Activated CD8-positive, alpha-beta T cell treated with anti-CD3 and anti-CD28 coated beads for 36 hours (primary cell): ENCODE measurements at regions of chr7 and their contacts with region 1.

Region 1: GRCh38 chr7:99990460-99990852 is 14.6 kb upstream of the AZGP1 start:
- DNase-seq: no peak
- ATAC-seq: no peak
- H3K4me3 Mint-ChIP-seq: no peak overlapping the region
- H3K27ac Mint-ChIP-seq: no peak overlapping the region
- H3K4me1 Mint-ChIP-seq: peaks cover 3% of the 10 kb centered on the region
- H3K27me3 Mint-ChIP-seq: peaks cover 4% of the 10 kb centered on the region
- CTCF ChIP-seq: no peak

Region 2: DNA sequence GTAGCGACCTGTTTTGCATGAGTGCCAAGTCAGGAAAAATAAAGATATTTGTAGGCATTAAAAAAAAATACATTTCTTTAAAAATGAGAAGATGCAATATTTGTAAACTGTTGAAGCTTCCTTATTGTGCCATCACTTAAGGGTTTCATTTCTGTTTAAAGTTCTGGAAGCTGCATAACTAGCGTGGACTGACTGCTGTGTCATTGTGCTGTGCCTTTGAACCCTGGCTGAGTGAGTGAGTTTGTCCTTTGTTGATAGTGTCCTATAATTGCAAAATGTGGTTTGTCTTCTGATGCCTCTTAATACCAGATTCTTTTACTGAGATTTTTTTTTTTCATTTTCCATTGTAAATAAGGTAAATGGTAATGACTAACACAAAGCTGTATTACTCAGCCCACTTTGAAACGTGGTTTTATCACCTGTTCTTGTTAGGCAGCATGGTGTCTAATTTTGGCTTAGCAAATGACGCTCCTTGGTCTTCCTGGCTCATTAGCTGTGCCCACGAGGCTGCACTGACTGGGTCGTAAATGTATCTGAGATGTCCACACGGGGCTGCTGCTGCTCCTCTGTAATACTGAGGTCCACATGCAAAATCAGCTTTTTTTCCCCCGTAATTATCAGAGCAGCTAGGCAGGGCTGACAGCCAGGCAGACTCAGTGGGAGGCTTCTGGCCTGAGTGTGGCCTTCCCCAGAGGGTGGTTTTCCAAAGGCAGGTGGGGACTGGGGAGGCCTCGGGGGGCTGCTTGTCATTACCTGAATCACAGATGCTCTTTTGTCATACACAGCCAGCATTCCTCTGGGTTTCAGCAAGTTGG is 359.0 kb before region 1 on chr7:
- CTCF ChIA-PET with region 1: interaction called, 13 read pairs
- POLR2A ChIA-PET with region 1: no interaction called
- intact Hi-C with region 1: no loop called
- DNase-seq: peak; percentile 87
- ATAC-seq: peak; percentile 97
- H3K4me3 Mint-ChIP-seq: peak overlapping the region; percentile 41
- H3K27ac Mint-ChIP-seq: peak overlapping the region; percentile 96
- H3K4me1 Mint-ChIP-seq: peaks cover 72% of the 10 kb centered on the region
- H3K27me3 Mint-ChIP-seq: no peaks in the 10 kb centered on the region
- CTCF ChIP-seq: peak; percentile 54

Region 3: DNA sequence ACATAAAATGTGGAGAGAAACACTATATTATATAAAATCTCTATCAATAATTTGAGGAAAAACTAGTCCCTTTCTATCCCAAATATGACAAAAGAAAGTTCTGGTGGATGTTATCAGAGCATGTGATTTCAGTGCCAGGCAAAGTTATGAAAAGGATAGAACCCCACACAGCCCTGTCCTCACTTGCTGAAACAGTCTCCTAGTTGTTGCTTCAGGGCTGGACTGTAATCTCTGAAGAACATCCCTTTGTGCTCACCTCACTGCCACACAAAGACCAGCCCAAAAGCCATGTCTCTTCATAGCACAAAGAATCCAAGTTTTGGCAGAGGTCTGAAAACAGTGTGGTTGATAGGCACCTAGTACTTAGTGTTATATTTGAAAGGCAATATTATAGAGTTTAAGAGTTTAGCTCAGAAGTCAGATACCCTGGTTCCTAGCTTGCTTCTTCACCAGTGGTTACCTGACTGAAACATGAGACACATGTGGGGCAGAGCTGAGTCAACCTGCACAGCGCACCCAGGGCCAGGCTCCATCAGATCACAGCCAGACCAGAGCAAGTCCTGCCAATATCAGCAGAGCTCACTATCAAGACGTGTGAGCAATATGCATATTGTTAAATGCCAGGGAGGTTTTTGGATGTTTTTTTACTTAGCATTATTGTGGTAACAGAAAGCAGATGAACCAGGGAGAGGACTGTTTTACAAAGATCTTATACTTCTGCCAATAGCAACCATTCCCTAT is 280.4 kb before region 1 on chr7:
- CTCF ChIA-PET with region 1: no interaction called
- POLR2A ChIA-PET with region 1: no interaction called
- intact Hi-C with region 1: no loop called
- DNase-seq: no peak
- ATAC-seq: no peak
- H3K4me3 Mint-ChIP-seq: no peak overlapping the region
- H3K27ac Mint-ChIP-seq: no peak overlapping the region
- H3K4me1 Mint-ChIP-seq: no peaks in the 10 kb centered on the region
- H3K27me3 Mint-ChIP-seq: no peaks in the 10 kb centered on the region
- CTCF ChIP-seq: no peak

Region 4: GRCh38 chr7:99975782-99976521 is 14.5 kb before region 1 on chr7 and contains the start of gene AZGP1:
- CTCF ChIA-PET with region 1: interaction called, 36 read pairs
- POLR2A ChIA-PET with region 1: no interaction called
- intact Hi-C with region 1: no loop called
- DNase-seq: no peak
- ATAC-seq: peak; percentile 18
- H3K4me3 Mint-ChIP-seq: no peak within 1 kb of the TSS
- H3K27ac Mint-ChIP-seq: no peak within 1 kb of the TSS
- H3K4me1 Mint-ChIP-seq: peaks cover 10% of the 10 kb centered on the region
- H3K27me3 Mint-ChIP-seq: peaks cover 5% of the 10 kb centered on the region
- CTCF ChIP-seq: no peak
- total RNA-seq, gene AZGP1: not detected

Region 5: DNA sequence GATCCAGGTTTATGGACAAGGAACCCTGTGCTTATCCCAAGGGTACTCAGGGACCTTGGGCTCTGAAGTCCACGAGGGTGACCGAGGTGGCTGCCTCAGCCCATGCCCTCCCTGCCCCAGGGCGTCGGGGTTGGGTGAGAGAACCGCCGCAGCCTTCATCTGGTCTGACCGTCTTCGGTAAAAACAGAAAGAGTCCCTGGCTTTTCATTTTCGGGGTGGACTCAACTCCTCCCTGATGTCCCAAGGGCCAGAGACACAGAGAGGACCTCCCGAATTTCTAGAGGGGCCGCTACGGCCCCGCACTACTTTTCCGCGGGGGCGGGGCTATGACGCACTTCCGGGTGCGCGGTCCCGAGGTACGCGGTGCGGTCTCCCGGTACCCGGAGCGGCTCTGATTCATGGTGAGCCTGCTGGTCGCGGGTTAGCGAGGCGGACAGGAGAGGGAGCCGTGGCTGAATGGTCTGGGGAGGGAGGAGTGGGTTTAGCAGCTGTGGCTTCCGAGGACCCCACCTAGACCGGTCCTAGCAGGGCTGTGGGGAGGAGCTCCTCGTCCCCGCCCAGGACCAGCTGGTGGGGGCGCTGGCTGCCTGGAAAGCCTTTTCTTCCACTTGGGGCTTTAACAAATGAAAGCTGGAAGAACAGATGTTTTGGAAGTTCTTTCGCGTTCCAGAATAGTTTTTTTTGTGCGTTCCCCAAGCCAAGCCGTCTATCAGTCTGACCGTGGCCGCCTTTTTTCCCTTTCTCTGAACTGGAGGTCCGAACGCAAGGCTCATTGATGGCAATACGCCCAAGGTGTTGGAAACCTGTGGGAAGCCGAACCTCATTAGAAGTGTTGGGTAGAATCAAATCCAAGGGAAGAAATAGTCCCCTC is 59.2 kb after region 1 on chr7 and contains the start of gene ZSCAN21:
- CTCF ChIA-PET with region 1: interaction called, 20 read pairs
- POLR2A ChIA-PET with region 1: interaction called, 3 read pairs
- intact Hi-C with region 1: no loop called
- DNase-seq: peak; percentile 84
- ATAC-seq: peak; percentile 93
- H3K4me3 Mint-ChIP-seq: peak within 1 kb of the TSS; percentile 87
- H3K27ac Mint-ChIP-seq: peak within 1 kb of the TSS; percentile 94
- H3K4me1 Mint-ChIP-seq: peaks cover 16% of the 10 kb centered on the region
- H3K27me3 Mint-ChIP-seq: no peaks in the 10 kb centered on the region
- CTCF ChIP-seq: peak; percentile 19
- total RNA-seq, gene ZSCAN21: 6.3 to 6.9 TPM

Region 6: GRCh38 chr7:100081535-100082102 is 91.2 kb after region 1 on chr7 and contains the start of gene ZNF3:
- CTCF ChIA-PET with region 1: interaction called, 6 read pairs
- POLR2A ChIA-PET with region 1: no interaction called
- intact Hi-C with region 1: loop called (anchors 5 kb)
- DNase-seq: peak; percentile 99
- ATAC-seq: peak; percentile 83
- H3K4me3 Mint-ChIP-seq: peak within 1 kb of the TSS; percentile 87
- H3K27ac Mint-ChIP-seq: peak within 1 kb of the TSS; percentile 87
- H3K4me1 Mint-ChIP-seq: peaks cover 21% of the 10 kb centered on the region
- H3K27me3 Mint-ChIP-seq: no peaks in the 10 kb centered on the region
- CTCF ChIP-seq: peak; percentile 96
- total RNA-seq, gene ZNF3: 16.4 to 18.9 TPM